ENCODE measurements at regions of chr11 and their contacts with region 1.

Region 1: DNA sequence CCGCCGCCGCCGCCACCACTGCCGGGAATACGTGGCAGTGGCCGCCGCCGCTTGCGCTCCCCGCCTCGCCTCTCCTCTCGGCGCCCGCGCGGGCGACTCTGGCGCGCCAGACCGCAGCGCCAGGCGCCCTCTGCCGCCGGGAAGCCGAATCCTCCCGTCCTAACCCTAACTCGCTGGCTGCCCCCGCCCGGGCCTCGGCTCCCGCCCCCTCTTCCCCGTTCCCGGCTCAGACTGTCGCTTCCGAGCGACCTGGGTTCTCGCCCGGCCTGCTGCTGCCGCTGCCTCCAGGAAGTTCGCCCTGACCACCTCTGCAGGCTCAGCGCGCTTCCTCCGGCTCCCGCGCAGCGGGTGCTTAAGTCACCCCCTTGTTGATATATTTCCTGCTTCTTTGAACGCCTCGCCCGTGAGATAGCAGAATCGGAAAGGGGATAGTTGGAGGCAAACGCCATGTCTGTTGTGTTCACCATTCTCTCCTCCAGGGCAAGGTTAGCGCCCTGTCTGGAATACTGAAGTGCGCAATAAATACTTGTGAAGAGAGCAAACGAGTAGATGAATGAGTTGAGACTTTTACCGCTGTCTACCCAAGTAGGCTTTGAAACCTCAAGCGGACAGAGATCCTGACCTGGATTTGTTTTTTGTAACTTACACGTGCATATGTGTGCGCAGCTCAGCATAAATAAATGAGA is at the start of gene SMCO4:
- DNase-seq: peak; percentile 80
- H3K4me3 Mint-ChIP-seq: peak within 1 kb of the TSS; percentile 87
- H3K27ac Mint-ChIP-seq: peak within 1 kb of the TSS; percentile 85
- H3K4me1 Mint-ChIP-seq: peaks cover 36% of the 10 kb centered on the region
- H3K27me3 Mint-ChIP-seq: peaks cover 7% of the 10 kb centered on the region
- total RNA-seq, gene SMCO4: 55.3 to 60.0 TPM

Region 2: DNA sequence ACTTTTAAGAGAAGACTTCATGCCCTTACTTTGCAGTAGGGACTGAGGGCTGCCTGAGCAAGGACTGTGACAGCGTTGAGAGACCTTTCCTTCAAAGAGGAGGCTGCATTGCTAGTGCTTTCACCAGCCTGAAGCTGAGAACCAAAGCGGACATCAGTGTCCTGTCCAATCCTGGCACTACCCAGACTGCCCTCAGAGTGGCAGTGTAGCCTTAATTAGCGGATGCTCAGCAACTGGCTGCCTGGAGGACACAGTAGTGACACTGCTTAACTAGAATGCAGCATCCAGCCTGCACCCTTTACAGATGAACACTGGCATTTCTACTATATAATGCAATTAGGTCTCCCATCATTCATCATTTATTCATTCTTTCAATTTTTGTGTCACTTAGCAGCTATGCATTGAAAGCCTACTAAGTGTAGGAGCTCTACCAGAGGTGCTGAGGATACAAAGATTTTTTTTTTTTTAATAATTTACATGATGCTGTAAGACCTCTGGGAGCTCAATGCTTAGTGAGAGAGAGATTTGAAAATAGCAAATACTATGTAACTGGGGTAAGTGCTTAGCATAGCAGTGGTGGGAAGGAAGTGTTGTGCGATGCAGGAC is 308.7 kb before region 1 on chr11:
- CTCF ChIA-PET with region 1: interaction called, 10 read pairs
- POLR2A ChIA-PET with region 1: interaction called, 3 read pairs
- DNase-seq: peak; percentile 79
- H3K4me3 Mint-ChIP-seq: no peak overlapping the region
- H3K27ac Mint-ChIP-seq: no peak overlapping the region
- H3K4me1 Mint-ChIP-seq: no peaks in the 10 kb centered on the region
- H3K27me3 Mint-ChIP-seq: peaks cover 18% of the 10 kb centered on the region

Region 3: GRCh38 chr11:93512073-93512475 is 31.4 kb before region 1 on chr11:
- CTCF ChIA-PET with region 1: interaction called, 9 read pairs
- POLR2A ChIA-PET with region 1: interaction called, 19 read pairs
- DNase-seq: peak; percentile 50
- H3K4me3 Mint-ChIP-seq: peak overlapping the region; percentile 54
- H3K27ac Mint-ChIP-seq: peak overlapping the region; percentile 89
- H3K4me1 Mint-ChIP-seq: peaks cover 44% of the 10 kb centered on the region
- H3K27me3 Mint-ChIP-seq: no peaks in the 10 kb centered on the region

Region 4: DNA sequence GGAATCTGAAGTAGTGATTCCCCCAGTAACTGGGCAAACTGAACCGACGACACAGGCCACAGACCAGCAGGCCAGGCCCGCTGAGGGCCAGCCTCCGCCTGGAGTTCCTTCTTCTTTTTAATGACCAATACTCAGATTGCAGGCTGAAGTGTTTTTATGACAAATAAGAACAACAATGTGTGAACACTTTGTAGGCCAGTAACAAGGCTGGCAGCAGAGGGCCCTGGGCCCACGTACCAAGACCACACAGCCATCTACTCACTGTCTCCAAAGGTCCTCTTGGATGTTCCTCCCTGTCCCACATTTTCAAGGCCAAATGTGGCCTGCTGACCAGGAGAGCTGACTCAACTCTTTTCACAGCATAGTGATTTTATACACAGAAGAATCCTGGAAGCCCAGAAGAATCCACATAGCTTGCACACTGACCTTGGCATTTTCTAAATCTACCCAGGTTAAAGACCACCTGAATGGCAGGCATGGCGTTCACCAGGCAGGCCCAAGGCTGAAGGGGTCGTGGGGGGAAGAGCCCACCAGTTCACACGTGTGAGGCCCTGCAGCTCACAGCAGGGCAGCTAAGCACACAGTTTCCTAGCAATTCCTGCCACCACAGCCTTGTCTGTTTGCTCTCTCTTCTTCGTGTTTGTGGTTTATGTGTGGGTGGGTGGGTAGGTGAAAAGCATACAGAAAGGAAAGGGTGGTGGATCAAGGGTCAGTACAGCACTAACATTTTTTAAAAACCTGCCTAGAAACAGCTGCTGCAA is 13.5 kb before region 1 on chr11:
- CTCF ChIA-PET with region 1: interaction called, 14 read pairs
- POLR2A ChIA-PET with region 1: interaction called, 54 read pairs
- DNase-seq: no peak
- H3K4me3 Mint-ChIP-seq: peak overlapping the region; percentile 42
- H3K27ac Mint-ChIP-seq: peak overlapping the region; percentile 84
- H3K4me1 Mint-ChIP-seq: peaks cover 83% of the 10 kb centered on the region
- H3K27me3 Mint-ChIP-seq: no peaks in the 10 kb centered on the region

Region 5: DNA sequence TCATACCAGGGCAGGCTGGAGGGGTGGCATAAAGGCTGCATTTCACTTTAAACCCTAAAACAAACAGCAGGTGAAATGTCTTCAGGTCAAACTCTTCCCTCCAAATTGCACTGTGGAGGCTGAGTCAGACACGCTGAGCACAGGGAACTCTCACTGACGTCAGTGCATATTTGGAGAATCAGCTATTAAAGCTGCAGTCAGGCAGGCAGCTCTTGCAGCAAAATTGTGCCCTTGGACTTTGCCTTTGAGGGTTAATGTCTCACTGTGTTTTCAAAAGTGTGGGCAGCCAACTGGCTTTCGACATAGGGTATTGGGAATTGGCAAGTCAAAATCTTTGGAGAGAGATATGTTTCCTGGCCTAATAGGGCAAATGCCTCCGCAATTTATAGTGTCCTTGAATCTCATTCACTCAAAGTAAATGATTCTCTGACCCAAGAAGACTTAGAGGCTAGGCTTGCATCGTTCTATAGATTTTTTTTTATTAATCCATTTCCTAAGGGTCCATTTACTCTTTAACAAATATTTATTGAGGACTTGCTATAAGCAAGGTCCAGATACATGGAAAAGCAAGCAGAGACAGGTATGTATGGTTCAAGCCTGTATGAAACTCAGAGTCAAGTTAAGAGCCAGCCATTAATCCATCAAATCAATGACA is 27.5 kb after region 1 on chr11:
- CTCF ChIA-PET with region 1: no interaction called
- POLR2A ChIA-PET with region 1: no interaction called
- DNase-seq: no peak
- H3K4me3 Mint-ChIP-seq: no peak overlapping the region
- H3K27ac Mint-ChIP-seq: no peak overlapping the region
- H3K4me1 Mint-ChIP-seq: no peaks in the 10 kb centered on the region
- H3K27me3 Mint-ChIP-seq: peaks cover 6% of the 10 kb centered on the region

Region 6: GRCh38 chr11:93591247-93591898 is 47.9 kb after region 1 on chr11:
- CTCF ChIA-PET with region 1: no interaction called
- POLR2A ChIA-PET with region 1: no interaction called
- DNase-seq: no peak
- H3K4me3 Mint-ChIP-seq: no peak overlapping the region
- H3K27ac Mint-ChIP-seq: no peak overlapping the region
- H3K4me1 Mint-ChIP-seq: peaks cover 7% of the 10 kb centered on the region
- H3K27me3 Mint-ChIP-seq: peaks cover 5% of the 10 kb centered on the region

Region 7: DNA sequence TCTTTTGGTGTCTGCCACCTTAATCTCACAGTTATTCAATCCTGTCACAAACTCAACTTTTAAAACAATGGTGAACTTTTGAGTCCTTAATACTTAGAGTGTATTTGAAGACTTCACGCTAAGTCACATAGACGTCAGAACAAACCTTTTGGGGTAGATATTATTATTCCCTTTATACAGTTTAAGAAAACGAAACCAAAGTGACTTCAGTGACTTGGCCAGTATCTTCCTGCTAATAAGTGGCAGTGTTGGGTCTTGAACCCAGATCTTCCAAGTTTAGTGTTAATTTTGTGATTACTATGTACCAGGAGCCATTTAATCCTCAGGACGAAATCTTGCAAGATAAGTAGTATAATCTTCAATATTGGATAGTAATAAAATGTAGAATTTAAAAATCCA is 118.7 kb after region 1 on chr11:
- CTCF ChIA-PET with region 1: no interaction called
- POLR2A ChIA-PET with region 1: interaction called, 11 read pairs
- DNase-seq: no peak
- H3K4me3 Mint-ChIP-seq: peak overlapping the region; percentile 87
- H3K27ac Mint-ChIP-seq: peak overlapping the region; percentile 84
- H3K4me1 Mint-ChIP-seq: peaks cover 54% of the 10 kb centered on the region
- H3K27me3 Mint-ChIP-seq: no peaks in the 10 kb centered on the region

Region 8: DNA sequence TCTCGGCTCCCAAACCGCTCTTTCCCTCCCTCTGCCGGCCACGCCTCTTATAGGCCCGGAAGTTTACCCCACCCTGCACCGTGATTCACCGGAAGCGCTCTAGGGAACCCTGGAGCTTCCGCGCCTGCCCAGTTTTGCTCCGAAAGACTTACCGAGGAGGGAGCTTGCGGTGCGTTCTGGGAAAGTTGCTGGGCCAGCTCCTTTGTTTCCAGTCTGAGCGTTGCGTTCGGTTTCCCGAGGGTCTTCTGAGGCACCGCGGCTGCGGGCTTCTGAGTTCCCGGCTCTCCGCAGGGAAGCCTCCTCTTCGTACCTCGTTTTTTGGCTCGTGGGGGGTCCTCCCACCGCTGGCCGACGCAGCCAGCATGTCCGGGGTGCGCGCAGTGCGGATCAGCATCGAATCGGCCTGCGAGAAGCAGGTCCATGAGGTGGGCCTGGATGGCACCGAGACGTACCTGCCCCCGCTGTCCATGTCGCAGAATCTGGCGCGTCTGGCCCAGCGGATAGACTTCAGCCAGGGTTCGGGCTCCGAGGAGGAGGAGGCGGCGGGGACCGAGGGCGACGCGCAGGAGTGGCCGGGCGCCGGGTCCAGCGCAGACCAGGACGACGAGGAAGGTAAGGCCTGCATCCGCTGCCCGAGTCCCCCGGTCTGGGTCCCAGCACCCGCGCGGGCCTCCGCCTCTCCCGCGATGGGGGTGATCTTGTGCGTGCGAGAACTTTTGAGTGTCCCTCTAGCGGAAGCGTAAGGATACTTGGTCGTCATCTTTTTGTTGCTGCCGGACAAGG is 240.9 kb after region 1 on chr11 and contains the start of gene MED17:
- CTCF ChIA-PET with region 1: no interaction called
- POLR2A ChIA-PET with region 1: interaction called, 11 read pairs
- DNase-seq: peak; percentile 91
- H3K4me3 Mint-ChIP-seq: peak within 1 kb of the TSS; percentile 97
- H3K27ac Mint-ChIP-seq: peak within 1 kb of the TSS; percentile 90
- H3K4me1 Mint-ChIP-seq: peaks cover 50% of the 10 kb centered on the region
- H3K27me3 Mint-ChIP-seq: no peaks in the 10 kb centered on the region
- total RNA-seq, gene MED17: 40.6 to 42.9 TPM